HCT116 (cell line): ENCODE measurements at regions of chr1 and their contacts with region 1.

Region 1: DNA sequence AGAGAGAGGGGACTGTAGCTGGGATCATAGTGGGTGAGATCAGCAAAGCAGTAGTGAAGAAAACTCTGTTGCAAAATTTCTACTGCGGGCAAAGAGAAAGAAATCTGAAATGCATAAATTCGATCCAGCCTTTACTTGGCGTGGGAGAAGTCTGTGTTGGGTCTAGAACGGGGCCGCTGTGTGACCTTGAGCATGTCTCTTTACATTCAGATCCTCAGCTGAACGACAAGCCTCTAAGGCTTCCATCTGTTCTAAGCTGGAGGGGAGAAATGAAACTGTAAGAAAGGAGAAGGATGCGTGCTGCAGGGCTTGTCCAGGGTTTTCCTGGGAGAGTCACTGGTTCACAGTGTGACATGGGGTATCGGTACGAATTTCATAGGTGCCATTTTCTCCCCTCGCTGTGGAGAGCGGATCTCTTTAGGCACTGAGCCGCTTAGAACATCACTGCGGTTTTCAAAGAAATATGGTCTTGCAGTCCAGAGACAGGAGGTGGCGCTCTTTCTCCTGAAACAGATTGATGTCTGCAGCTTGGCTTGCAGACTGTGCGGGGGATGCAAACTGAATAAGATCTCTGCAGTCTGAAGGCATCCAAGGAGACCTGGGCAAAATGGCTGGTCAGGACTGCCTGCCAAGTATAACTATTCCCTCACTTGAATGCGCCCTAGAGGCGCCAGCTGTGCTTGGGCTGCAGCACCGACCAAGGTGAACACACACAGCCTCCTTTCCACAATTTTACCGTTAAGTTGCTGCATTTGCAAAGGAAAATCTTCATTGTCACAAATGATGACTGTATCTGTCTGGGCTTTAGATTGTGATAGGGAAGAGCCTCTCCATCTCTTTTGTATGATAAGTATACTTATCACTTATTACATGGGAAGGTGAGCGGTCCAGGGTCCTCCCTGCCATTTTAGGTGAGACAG is 104.1 kb downstream of the XCL2 start:
- DNase-seq: peak; percentile 80
- ATAC-seq: peak; percentile 96
- H3K4me3 ChIP-seq: peak overlapping the region; percentile 13 to 50; a peak in 3 of 4 replicates
- H3K27ac ChIP-seq: no peak overlapping the region; the same call in 1 of the 2 replicates
- H3K4me1 ChIP-seq: peaks cover 17 to 22% of the 10 kb centered on the region in 2 experiments; a peak in 3 of 4 replicates
- H3K27me3 ChIP-seq: no peaks in the 10 kb centered on the region
- CTCF ChIP-seq: peak; percentile 82 to 86 (median 86)
- POLR2A ChIP-seq: no peak
- RAD21 ChIP-seq: peak; percentile 96

Region 2: DNA sequence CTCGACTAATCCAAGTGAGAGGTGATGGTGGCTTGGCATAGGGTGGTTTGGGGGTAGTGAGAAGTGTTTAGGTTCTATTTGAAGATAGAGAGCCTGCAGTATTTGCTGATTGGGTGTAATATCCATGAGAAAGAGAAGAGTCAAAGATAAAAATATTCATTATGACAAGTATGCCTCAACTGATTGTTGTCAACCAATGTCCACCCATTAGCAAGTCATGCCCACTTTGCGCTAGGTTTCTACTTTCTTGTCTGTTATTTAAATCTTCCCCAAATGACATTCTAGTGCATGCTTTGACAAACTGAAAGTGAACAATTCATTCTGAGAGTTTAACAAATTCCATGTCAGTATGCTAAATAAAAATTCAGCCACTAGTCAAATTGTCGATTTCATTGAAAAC is 132.9 kb after region 1 on chr1:
- CTCF ChIA-PET with region 1: interaction called, 3 read pairs
- POLR2A ChIA-PET with region 1: no interaction called
- RAD21 ChIA-PET with region 1: no interaction called
- intact Hi-C with region 1: loop called (anchors 2 kb)
- DNase-seq: no peak
- ATAC-seq: no peak
- H3K4me3 ChIP-seq: no peak overlapping the region
- H3K27ac ChIP-seq: no peak overlapping the region
- H3K4me1 ChIP-seq: no peaks in the 10 kb centered on the region
- H3K27me3 ChIP-seq: no peaks in the 10 kb centered on the region
- CTCF ChIP-seq: no peak
- POLR2A ChIP-seq: no peak
- RAD21 ChIP-seq: no peak